Activated CD4-positive, alpha-beta T cell treated with anti-CD3 and anti-CD28 coated beads for 36 hours (primary cell): ENCODE measurements at regions of chr15 and their contacts with region 1.

Region 1: GRCh38 chr15:75891895-75892294 is 11.8 kb upstream of the FBXO22 start:
- DNase-seq: no peak
- ATAC-seq: peak; percentile 81
- H3K4me3 Mint-ChIP-seq: no peak overlapping the region
- H3K27ac Mint-ChIP-seq: peak overlapping the region; percentile 74
- H3K4me1 Mint-ChIP-seq: peaks cover 10% of the 10 kb centered on the region
- H3K27me3 Mint-ChIP-seq: no peaks in the 10 kb centered on the region

Region 2: GRCh38 chr15:75850708-75851107 is 41.2 kb before region 1 on chr15:
- CTCF ChIA-PET with region 1: no interaction called
- POLR2A ChIA-PET with region 1: no interaction called
- intact Hi-C with region 1: loop called in 1 of 2 experiments (anchors 1 kb)
- DNase-seq: no peak
- ATAC-seq: no peak
- H3K4me3 Mint-ChIP-seq: no peak overlapping the region
- H3K27ac Mint-ChIP-seq: no peak overlapping the region
- H3K4me1 Mint-ChIP-seq: peaks cover 53% of the 10 kb centered on the region
- H3K27me3 Mint-ChIP-seq: no peaks in the 10 kb centered on the region